GM12878 (cell line): ENCODE measurements at regions of chr18 and their contacts with region 1.

Region 1: DNA sequence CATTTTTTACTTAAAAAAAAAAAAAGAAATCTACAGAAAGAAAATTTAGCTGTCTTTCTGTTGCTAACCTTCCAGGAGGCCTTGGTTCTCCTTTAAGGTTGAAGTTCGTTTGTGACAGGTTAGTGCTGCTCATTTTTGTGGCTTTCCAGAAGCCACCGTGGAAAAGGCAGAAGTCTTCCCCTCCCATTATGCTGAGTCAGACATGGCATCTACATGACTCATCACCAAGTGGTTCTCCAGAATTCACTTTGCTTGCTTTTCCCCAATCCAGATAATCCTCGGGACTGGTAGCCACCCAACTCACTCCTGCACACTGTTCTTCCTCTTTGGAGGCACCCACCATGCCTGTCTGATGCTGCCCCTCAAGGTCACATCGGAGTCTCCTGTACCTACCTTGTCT is 228.7 kb downstream of the PIK3C3 start:
- DNase-seq: no peak
- ATAC-seq: no peak
- H3K4me3 ChIP-seq: no peak overlapping the region
- H3K27ac ChIP-seq: no peak overlapping the region
- H3K4me1 ChIP-seq: no peaks in the 10 kb centered on the region
- H3K27me3 ChIP-seq: no peaks in the 10 kb centered on the region
- CTCF ChIP-seq: no peak
- EP300 ChIP-seq: no peak
- POLR2A ChIP-seq: no peak
- RAD21 ChIP-seq: no peak

Region 2: DNA sequence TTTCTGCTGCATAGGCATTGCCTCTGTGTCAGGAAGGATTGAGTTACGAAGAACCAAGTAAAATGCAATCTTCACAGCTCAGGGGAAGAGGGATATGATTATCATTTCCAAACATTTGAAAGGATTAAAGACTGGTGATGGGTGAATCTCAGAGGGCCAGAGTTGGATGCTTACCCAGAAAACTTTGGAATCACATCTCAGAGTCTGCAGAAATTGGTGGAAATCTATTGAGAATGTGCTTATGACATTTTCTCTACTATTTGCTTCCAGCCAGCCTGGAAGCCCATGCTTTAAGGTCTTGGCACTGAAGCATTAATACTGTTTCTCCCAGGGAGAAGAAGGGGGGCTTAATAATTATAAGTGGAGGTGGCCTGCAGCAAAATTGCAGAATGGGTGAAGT is 1530.1 kb before region 1 on chr18:
- CTCF ChIA-PET with region 1: no interaction called
- POLR2A ChIA-PET with region 1: no interaction called
- RAD21 ChIA-PET with region 1: no interaction called
- SMC1A ChIA-PET with region 1: no interaction called
- in situ Hi-C with region 1: no loop called
- intact Hi-C with region 1: no loop called
- DNase-seq: no peak
- ATAC-seq: no peak
- H3K4me3 ChIP-seq: no peak overlapping the region
- H3K27ac ChIP-seq: no peak overlapping the region
- H3K4me1 ChIP-seq: no peaks in the 10 kb centered on the region
- H3K27me3 ChIP-seq: no peaks in the 10 kb centered on the region
- CTCF ChIP-seq: no peak
- EP300 ChIP-seq: no peak
- POLR2A ChIP-seq: no peak
- RAD21 ChIP-seq: no peak

Region 3: DNA sequence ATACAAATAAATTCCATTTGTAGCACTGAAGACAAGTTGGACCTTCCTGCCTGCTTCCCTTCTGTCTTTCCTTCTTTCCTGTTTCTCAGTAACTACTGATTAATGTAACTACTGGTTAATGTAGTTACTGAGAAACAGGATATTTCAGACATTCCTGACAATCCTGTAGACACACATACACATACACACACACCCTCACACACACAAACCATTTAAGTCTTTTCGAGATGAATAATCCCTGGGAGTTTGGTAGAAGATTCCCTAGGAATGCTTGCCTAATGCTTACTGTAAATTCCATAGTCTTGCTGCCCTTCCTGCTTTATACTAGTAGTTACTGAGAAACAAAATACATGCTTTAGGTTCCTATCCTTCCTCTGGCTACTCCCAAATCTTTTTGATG is 144.8 kb before region 1 on chr18:
- CTCF ChIA-PET with region 1: no interaction called
- POLR2A ChIA-PET with region 1: no interaction called
- RAD21 ChIA-PET with region 1: no interaction called
- SMC1A ChIA-PET with region 1: no interaction called
- in situ Hi-C with region 1: no loop called
- intact Hi-C with region 1: no loop called
- DNase-seq: no peak
- ATAC-seq: no peak
- H3K4me3 ChIP-seq: no peak overlapping the region
- H3K27ac ChIP-seq: no peak overlapping the region
- H3K4me1 ChIP-seq: no peaks in the 10 kb centered on the region
- H3K27me3 ChIP-seq: no peaks in the 10 kb centered on the region
- CTCF ChIP-seq: no peak
- EP300 ChIP-seq: no peak
- POLR2A ChIP-seq: no peak
- RAD21 ChIP-seq: no peak

Region 4: GRCh38 chr18:42201137-42201536 is 17.4 kb after region 1 on chr18:
- CTCF ChIA-PET with region 1: interaction called, 8 read pairs
- POLR2A ChIA-PET with region 1: interaction called, 5 read pairs
- RAD21 ChIA-PET with region 1: interaction called, 16 read pairs
- SMC1A ChIA-PET with region 1: interaction called, 20 read pairs
- in situ Hi-C with region 1: no loop called
- intact Hi-C with region 1: no loop called
- DNase-seq: no peak
- ATAC-seq: peak; percentile 54
- H3K4me3 ChIP-seq: no peak overlapping the region
- H3K27ac ChIP-seq: no peak overlapping the region
- H3K4me1 ChIP-seq: no peaks in the 10 kb centered on the region
- H3K27me3 ChIP-seq: no peaks in the 10 kb centered on the region
- CTCF ChIP-seq: no peak
- EP300 ChIP-seq: 0 out of 4 replicates have a peak, but pooled peaks of 1 of the 2 experiments have one; percentile 11
- POLR2A ChIP-seq: no peak
- RAD21 ChIP-seq: no peak

Region 5: GRCh38 chr18:42242758-42243157 is 59.0 kb after region 1 on chr18:
- CTCF ChIA-PET with region 1: interaction called, 4 read pairs
- POLR2A ChIA-PET with region 1: no interaction called
- RAD21 ChIA-PET with region 1: interaction called, 8 read pairs
- SMC1A ChIA-PET with region 1: interaction called, 13 read pairs
- in situ Hi-C with region 1: no loop called
- intact Hi-C with region 1: no loop called
- DNase-seq: no peak
- ATAC-seq: peak; percentile 84
- H3K4me3 ChIP-seq: no peak overlapping the region
- H3K27ac ChIP-seq: no peak overlapping the region
- H3K4me1 ChIP-seq: no peaks in the 10 kb centered on the region
- H3K27me3 ChIP-seq: no peaks in the 10 kb centered on the region
- CTCF ChIP-seq: no peak
- EP300 ChIP-seq: no peak
- POLR2A ChIP-seq: no peak
- RAD21 ChIP-seq: no peak

Region 6: DNA sequence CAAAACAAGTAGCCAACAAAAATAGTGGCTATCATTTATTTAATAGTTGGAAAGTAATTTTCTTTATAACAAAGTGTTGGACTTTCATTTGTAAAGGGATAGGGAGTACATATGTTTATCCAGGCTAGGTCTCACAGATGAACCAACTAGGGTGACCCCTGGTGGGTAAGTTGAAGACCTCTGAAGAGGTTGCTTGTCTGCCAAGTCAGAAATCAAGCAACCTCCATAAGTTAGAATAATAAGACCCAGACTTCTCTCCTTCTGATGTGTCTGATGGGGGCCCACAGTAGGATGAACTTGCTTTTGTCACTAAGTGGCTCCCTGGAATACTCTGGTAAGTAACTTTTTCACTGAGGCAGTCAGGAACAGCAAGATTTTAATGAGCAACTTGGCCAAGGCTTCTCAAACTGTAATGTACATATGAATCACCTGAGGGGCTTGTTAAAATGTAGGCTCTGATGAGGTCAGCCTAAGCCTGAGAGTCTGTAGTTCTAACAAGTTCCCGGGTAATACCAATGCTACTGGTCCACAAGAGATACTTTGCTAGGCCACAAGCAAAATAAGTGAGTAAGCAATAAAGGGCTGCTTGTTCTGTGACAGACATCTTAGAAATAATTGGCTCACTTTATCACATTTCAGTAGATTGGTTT is 90.9 kb after region 1 on chr18:
- CTCF ChIA-PET with region 1: interaction called, 19 read pairs
- POLR2A ChIA-PET with region 1: no interaction called
- RAD21 ChIA-PET with region 1: interaction called, 32 read pairs
- SMC1A ChIA-PET with region 1: interaction called, 10 read pairs
- in situ Hi-C with region 1: no loop called
- intact Hi-C with region 1: no loop called
- DNase-seq: no peak
- ATAC-seq: peak; percentile 92
- H3K4me3 ChIP-seq: no peak overlapping the region
- H3K27ac ChIP-seq: no peak overlapping the region
- H3K4me1 ChIP-seq: no peaks in the 10 kb centered on the region
- H3K27me3 ChIP-seq: no peaks in the 10 kb centered on the region
- CTCF ChIP-seq: peak; percentile 19 to 47 (median 24); a peak in 3 of 6 replicates
- EP300 ChIP-seq: no peak
- POLR2A ChIP-seq: no peak
- RAD21 ChIP-seq: peak; percentile 36; the same call in 1 of the 2 replicates